Left cardiac atrium (tissue), 4 donors: ENCODE measurements at regions of chrX and their contacts with region 1.

Region 1: DNA sequence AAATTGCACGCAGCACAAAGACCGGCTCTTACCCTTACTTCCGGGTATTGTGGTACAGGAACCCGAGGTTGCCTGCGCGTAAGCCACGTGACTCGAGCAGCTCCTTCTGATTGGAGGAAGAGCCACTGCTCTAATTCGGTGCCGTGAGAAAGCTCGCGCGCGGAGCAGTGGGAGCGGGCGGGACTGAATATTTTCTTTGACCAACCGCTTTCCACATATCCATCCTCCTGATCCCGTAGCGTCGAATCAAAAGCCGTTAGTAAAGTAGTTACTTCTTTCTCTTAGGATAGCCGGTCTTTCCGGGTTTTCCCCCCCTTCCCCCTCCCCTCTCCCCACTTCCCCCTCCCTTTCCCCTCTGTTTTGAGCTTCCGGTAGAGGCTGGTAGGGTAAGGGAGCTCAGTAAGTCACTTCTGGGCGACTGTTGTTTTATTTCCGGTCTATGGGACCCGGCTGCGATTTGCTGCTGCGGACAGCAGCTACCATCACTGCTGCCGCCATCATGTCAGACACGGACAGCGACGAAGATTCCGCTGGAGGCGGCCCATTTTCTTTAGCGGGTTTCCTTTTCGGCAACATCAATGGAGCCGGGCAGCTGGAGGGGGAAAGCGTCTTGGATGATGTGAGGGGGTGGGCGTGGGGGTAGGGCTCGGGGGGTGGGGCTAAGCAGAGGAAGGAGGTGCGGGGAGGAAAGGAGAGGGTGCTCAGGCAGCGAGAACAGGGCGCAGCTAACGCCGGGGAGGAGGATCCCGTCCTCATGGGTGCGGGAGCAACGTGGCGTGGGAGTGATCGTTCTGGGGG is at the start of gene TAF1:
- DNase-seq: peak; percentile 95
- ATAC-seq: peak; percentile 94 to 96
- total RNA-seq, gene TAF1: 17.8 to 23.0 TPM

Region 2: DNA sequence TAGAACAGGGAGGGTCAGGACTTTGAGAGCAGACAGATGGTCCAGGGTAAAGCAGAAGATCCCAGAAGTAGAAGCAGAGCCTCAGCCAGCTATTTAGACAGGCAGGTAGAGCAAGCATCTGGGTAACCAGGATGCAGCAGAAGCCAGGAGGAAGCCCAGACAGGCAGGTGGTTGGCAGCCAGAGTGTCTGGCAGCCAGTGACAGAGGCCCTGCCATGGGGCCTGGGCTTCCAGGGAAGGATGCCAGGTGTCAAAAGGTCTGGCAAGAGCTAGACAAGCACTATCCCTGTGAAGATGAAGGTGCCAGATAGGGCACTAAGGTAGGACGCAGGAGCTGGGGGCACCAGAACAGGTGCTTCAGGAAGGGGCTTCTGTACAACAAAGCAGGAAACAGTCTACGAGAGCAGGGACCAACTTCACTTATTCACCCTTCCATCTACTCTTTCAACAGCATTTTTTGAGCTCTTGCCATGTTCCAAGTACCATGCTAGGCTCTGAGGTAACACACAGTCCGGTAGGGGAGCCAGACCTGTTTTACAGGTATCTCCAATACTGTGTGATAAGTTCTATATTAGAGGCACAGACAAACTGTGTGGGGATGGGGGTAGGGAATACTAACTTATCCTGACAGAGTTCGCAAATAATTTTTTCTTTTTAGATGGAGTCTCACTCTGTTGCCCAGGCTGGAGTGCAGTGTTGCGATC is 181.1 kb before region 1 on chrX:
- intact Hi-C with region 1: no loop called
- DNase-seq: no peak
- ATAC-seq: no peak

Region 3: GRCh38 chrX:71254092-71254941 is 111.8 kb before region 1 on chrX and contains the start of gene ZMYM3:
- intact Hi-C with region 1: loop called (anchors 10 kb)
- DNase-seq: peak; percentile 88
- ATAC-seq: peak; percentile 95 to 97
- total RNA-seq, gene ZMYM3: 11.9 to 13.6 TPM

Region 4: GRCh38 chrX:71301195-71301924 is 64.7 kb before region 1 on chrX and contains the start of gene ITGB1BP2:
- intact Hi-C with region 1: loop called in 1 of 2 experiments (anchors 10 kb)
- DNase-seq: no peak
- ATAC-seq: peak; percentile 83 to 86
- total RNA-seq, gene ITGB1BP2: 90.5 to 115 TPM